BJ (cell line): ENCODE measurements at regions of chr2 and their contacts with region 1.

Region 1: DNA sequence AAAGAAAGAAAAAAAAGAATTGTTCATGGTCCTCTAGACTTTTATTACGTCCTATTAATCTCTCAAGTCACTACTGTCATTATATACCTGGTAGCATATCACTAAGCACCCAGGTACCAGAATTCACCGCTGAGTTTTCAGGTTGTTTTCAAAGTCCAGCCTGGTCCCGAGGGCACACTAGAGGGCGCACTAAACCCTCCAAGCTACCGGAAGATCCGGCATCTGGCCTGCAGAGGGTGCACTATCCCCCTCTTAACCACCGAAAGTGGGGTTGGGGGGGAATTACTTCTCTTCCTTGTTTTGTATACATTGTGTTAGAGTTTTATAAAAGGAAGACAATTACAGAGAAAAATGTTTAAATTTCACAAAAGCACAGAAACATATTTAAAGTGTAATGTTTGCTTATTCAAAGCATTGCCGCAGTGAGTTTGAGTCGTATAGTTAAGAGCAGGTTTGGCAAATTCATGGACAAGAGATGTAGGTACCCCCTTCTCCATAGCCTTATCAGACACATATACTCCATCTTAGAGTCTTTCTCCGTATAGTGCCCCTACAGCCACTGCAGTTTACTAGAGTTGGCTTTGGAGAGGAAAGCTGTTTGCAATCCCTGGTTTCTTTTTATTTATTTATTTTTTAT is 19.2 kb downstream of the MOGAT1 start:
- DNase-seq: no peak
- H3K4me3 ChIP-seq: no peak overlapping the region
- H3K27me3 ChIP-seq: no peaks in the 10 kb centered on the region
- CTCF ChIP-seq: peak; percentile 100

Region 2: DNA sequence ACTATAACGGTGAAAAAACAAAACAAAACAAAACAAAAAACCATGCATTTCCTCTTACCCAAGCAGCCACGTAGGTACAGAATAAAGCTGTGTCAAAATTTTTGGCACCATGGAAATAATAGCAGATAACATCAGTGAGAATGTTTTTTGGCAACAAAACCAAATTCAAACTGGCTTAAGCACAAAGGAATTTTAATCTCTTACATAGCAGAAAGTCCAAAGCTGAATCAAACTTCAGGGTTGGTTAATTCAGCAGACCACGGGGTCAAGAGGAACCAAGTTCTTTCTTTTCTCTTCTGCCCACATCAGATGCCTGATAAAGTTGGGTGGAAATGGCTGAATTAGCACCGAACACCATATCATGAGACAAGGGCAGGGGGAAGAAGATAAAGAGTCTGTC is 521.3 kb before region 1 on chr2:
- CTCF ChIA-PET with region 1: no interaction called
- POLR2A ChIA-PET with region 1: no interaction called
- DNase-seq: peak; percentile 19
- H3K4me3 ChIP-seq: no peak overlapping the region
- H3K27me3 ChIP-seq: no peaks in the 10 kb centered on the region
- CTCF ChIP-seq: no peak

Region 3: DNA sequence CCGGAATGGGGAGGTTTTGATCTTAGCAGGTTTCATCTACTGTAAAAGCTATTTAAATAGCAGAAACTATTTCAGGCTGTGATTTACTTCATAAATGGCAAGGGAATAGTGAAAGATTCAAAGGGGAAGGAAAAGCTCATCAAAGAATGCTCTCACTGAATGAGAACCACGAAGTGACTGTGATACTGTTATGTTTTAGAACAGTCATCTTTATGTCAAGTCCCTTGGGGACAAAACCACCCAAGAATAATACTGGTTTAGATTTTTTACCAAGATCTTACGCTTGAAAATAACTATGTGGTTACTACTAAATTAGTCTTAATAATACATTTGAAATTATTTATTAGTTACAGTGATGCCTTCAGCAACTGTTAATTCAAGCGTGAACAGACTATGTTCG is 62.9 kb before region 1 on chr2:
- CTCF ChIA-PET with region 1: no interaction called
- POLR2A ChIA-PET with region 1: no interaction called
- DNase-seq: no peak
- H3K4me3 ChIP-seq: no peak overlapping the region
- H3K27me3 ChIP-seq: no peaks in the 10 kb centered on the region
- CTCF ChIP-seq: no peak

Region 4: DNA sequence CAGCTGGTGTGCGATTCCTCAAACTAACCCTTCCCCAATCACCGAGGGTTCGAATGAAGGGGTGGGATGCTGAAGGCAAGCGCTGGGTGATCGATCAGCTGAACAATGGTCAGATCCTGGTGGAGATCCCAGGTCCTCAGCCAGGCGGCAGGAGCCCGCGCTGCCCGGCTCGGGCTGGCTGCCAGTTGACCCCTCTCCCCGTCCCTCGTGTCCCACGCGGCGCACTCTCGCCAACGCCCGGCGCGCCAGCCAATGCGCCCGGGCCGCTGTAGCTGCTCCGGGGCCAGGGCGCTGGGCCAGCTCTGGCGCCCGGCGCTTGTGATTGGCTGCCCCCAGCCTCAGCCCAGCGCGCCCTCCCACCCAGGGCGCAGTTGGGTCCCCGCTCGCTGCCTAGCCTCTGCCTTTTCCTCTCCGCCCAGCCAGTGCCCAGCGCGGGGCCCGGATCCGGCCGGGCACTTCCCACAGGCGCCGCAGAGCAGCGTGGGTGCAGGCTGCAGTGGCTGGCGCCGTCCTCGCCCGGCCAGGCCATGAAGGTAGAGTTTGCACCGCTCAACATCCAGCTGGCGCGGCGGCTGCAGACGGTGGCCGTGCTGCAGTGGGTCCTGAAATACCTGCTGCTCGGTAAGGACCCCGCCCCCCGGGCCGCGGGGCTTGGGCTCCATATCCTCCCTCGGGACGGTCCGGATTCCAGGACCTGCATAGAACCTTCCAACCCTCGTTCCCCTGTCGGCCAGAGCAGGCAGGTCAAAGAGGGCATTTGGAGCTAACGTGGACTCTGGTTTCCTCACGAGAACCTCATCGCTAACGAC is 19.2 kb before region 1 on chr2 and contains the start of gene MOGAT1:
- CTCF ChIA-PET with region 1: interaction called, 11 read pairs
- POLR2A ChIA-PET with region 1: no interaction called
- DNase-seq: no peak
- H3K4me3 ChIP-seq: peak within 1 kb of the TSS; percentile 31
- H3K27me3 ChIP-seq: peaks cover 17% of the 10 kb centered on the region
- CTCF ChIP-seq: no peak
- polyA plus RNA-seq, gene MOGAT1: not detected in 2 replicates

Region 5: GRCh38 chr2:222701721-222702131 is 11.0 kb after region 1 on chr2:
- CTCF ChIA-PET with region 1: interaction called, 83 read pairs
- POLR2A ChIA-PET with region 1: no interaction called
- DNase-seq: no peak
- H3K4me3 ChIP-seq: no peak overlapping the region
- H3K27me3 ChIP-seq: no peaks in the 10 kb centered on the region
- CTCF ChIP-seq: no peak

Region 6: DNA sequence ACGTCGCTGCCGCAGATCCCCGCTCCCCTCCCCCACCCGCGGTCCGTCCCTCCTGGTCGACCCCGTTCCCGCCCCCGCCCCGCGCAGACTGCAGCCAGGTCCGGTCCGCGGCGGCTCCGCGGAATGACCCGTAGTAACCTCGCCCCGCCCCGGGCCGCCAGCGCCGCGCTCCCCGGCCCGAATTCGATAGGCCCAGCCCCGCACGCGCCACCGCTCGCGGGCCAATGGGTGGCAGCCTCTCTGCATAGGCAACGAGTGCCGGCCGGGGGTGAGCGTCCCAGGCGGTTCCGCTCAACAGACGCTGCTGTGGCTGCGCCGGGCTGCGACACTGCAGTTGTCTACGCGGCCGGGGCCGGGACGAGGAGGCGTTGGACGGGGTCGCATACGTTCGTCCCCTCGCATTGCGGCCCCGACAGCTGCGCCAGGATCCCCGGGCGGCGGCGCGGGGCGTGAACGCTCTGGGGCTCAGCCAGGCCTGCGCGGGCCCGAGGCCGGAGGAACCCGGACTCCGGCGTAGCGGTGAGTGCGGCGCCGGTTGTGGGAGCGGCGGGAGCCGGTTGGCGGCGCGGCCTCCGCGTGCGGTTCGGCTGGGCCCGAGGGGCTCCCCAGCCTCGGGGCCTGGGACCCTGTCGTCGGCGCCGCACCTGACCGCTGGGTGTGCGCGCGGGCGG is 170.2 kb after region 1 on chr2 and contains the start of gene ACSL3:
- CTCF ChIA-PET with region 1: interaction called, 14 read pairs
- POLR2A ChIA-PET with region 1: no interaction called
- DNase-seq: no peak
- H3K4me3 ChIP-seq: peak within 1 kb of the TSS; percentile 93
- H3K27me3 ChIP-seq: no peaks in the 10 kb centered on the region
- CTCF ChIP-seq: no peak
- polyA plus RNA-seq, gene ACSL3: 46.3 and 56.8 TPM in 2 replicates

Region 7: GRCh38 chr2:222903234-222904220 is 212.8 kb after region 1 on chr2:
- CTCF ChIA-PET with region 1: interaction called, 22 read pairs
- POLR2A ChIA-PET with region 1: no interaction called
- DNase-seq: no peak
- H3K4me3 ChIP-seq: no peak overlapping the region
- H3K27me3 ChIP-seq: no peaks in the 10 kb centered on the region
- CTCF ChIP-seq: peak; percentile 61

Region 8: GRCh38 chr2:222939208-222939856 is 248.7 kb after region 1 on chr2:
- CTCF ChIA-PET with region 1: interaction called, 14 read pairs
- POLR2A ChIA-PET with region 1: no interaction called
- DNase-seq: no peak
- H3K4me3 ChIP-seq: no peak overlapping the region
- H3K27me3 ChIP-seq: no peaks in the 10 kb centered on the region
- CTCF ChIP-seq: peak; percentile 84